Activated naive CD4-positive, alpha-beta T cell treated with anti-CD3 and anti-CD28 coated beads for 36 hours (primary cell): ENCODE measurements at regions of chr16 and their contacts with region 1.

Region 1: DNA sequence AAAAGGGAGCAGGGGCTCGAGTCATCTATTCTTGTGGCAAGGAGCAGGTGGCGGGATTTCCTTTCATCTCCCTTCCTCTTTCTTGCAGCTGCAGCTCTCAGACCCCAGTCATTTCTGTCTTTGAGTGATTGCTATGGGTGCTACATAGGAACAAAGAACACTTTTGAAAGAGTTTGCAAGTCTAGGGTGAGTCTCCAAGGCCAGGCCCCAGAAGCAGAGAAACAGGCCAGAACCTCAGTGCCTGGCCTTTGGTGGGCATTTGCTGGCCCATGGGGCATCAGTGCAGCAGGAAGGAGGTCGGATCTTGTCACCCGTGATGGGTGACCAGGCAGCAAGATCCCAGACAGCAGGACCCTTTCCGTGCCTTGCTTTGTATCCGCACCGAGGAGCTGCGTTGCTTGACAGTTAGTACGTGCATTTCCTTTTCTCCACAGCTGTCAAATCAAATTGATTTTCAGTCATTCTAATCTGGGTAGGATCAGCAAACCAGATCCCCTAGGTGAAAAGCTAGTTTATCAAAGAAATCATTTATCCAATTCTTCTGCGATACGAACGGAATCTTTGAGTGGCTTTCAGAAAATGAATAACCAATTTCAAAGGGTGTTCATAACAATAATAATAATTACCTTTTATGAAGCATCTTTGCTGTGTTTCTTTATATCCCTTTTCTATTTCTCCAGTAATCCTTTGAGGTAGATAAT is 244.6 kb upstream of the MAF start:
- DNase-seq: peak; percentile 37
- H3K4me3 Mint-ChIP-seq: no peak overlapping the region
- H3K27ac Mint-ChIP-seq: no peak overlapping the region
- H3K4me1 Mint-ChIP-seq: peaks cover 19% of the 10 kb centered on the region
- H3K27me3 Mint-ChIP-seq: peaks cover 4% of the 10 kb centered on the region

Region 2: DNA sequence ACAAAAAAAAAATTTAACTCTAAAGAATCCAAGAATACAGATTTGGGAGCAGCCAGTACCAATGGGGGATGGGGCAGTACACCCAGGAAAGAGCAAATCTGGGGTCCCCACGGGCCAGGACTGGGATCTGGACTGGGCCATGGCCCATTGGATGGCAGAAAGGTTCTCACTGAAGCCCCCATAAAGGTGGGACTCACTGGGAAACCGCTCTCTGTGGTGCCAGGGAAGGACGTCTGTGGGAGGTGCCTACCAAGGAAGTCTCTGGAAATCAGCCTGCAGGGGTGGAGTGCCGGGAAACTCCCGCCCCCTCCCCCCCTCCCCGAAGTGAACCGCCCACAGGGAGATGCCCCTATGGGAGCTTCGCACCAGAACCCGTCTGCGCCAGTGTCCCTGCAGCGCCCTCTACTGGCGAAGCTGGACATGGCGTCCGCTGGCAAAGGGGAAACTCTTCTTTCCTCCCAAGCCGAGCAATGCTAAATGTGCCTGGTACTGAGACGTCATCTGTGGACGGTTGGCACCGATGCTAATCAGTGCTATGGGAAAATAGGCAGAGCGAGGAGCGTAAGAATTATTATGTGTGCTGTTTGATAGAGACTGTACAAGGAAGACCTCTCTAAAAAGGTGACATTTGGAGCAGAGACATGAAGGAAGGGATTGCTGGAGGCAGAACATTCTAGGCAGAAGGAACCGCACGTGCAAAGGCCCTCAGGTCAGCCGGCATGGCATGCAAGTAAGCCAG is 1074.7 kb before region 1 on chr16:
- CTCF ChIA-PET with region 1: no interaction called
- intact Hi-C with region 1: loop called (anchors 10 kb)
- DNase-seq: peak; percentile 84
- H3K4me3 Mint-ChIP-seq: no peak overlapping the region
- H3K27ac Mint-ChIP-seq: no peak overlapping the region
- H3K4me1 Mint-ChIP-seq: peaks cover 18% of the 10 kb centered on the region
- H3K27me3 Mint-ChIP-seq: no peaks in the 10 kb centered on the region

Region 3: DNA sequence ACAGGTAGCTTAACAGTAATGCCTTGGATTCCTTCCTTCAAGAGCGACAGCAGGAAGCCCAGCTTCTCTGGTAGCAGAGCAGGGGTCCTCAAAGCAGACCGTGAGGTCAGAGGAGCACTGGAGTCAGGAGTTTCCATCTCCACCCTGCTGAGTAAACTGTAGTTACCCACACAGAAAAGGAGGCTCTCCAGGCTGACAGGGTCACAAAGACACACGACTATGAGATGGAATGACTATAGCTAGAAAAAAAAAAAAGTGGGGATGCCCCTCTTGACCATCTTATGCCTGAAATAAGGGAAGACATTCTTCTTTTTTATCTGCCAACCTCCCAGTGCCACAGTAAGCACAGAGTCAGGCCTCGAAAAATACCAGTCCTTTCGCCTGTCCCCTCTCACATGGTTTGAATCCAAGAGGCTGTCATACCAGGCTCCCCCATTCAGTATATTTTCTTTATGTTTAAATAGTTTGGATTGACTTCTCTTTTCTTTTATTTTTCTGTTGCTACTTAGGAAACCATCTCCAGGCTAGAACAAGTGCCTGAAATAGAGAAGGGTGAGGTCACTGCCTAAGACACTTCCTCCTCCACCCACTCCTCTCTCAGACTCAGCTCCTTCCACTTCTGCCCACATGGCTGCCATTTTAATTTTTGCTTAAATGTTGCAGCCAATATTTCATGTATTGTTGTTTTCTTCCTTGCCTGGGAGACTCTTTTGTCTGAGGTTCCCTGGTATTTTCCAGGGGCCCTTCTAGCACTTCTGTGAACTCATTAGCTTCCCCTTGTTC is 952.0 kb before region 1 on chr16:
- CTCF ChIA-PET with region 1: no interaction called
- intact Hi-C with region 1: loop called (anchors 10 kb)
- DNase-seq: peak; percentile 7
- H3K4me3 Mint-ChIP-seq: no peak overlapping the region
- H3K27ac Mint-ChIP-seq: no peak overlapping the region
- H3K4me1 Mint-ChIP-seq: peaks cover 18% of the 10 kb centered on the region
- H3K27me3 Mint-ChIP-seq: no peaks in the 10 kb centered on the region

Region 4: GRCh38 chr16:79628501-79628975 is 216.6 kb before region 1 on chr16:
- CTCF ChIA-PET with region 1: no interaction called
- intact Hi-C with region 1: loop called (anchors 5 kb)
- DNase-seq: peak; percentile 65
- H3K4me3 Mint-ChIP-seq: no peak overlapping the region
- H3K27ac Mint-ChIP-seq: no peak overlapping the region
- H3K4me1 Mint-ChIP-seq: peaks cover 10% of the 10 kb centered on the region
- H3K27me3 Mint-ChIP-seq: peaks cover 5% of the 10 kb centered on the region

Region 5: GRCh38 chr16:79664407-79664806 is 180.8 kb before region 1 on chr16:
- CTCF ChIA-PET with region 1: no interaction called
- intact Hi-C with region 1: no loop called
- DNase-seq: no peak
- H3K4me3 Mint-ChIP-seq: no peak overlapping the region
- H3K27ac Mint-ChIP-seq: no peak overlapping the region
- H3K4me1 Mint-ChIP-seq: no peaks in the 10 kb centered on the region
- H3K27me3 Mint-ChIP-seq: peaks cover 2% of the 10 kb centered on the region

Region 6: DNA sequence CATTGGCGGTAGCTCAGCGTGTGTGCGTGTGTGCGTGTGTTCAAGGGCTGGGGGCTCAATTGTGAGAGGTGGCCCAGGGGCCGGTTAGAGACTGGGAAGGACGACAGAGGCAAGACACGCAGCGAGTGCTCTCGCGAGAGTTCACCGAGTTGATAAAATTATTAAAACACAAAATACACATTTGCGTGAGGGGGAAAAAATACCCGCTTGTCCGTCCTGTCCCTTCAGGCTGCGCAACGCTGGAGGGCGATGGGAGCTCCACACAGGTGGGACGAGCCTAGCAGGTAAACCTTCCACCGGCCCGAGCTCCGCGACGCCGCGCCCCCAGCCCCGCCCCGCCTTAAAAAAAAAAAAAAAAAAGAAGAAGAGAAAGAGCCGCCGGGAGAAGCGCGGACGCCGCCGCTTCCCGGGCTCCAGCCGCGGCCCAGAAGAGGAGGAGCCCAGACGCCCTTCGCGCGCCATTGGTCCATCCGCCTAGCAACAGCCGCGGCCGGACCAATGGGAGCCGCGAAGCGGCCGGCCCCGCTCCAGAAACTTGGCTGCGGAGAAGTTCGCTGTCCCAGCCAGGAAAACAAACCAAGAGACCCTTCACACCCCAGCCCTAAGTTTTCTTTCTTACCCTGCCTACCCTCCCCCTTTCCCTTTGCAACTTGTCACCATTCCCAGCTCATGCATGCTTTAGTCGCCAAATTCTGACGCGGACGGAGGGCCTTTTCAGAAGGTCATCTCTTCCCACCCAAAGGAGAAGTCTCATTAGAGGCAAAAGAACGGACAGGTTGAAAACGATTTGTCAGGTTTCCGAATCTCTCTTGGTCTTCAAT is 74.7 kb before region 1 on chr16:
- CTCF ChIA-PET with region 1: no interaction called
- intact Hi-C with region 1: loop called (anchors 5 kb)
- DNase-seq: peak; percentile 76
- H3K4me3 Mint-ChIP-seq: peak overlapping the region; percentile 79
- H3K27ac Mint-ChIP-seq: no peak overlapping the region
- H3K4me1 Mint-ChIP-seq: peaks cover 14% of the 10 kb centered on the region
- H3K27me3 Mint-ChIP-seq: peaks cover 15% of the 10 kb centered on the region